ENCODE measurements at regions of chr19 and their contacts with region 1.

Region 1: GRCh38 chr19:19643158-19644053 is at the start of gene GMIP:
- DNase-seq: peak; percentile 82 to 94 (median 88)
- ATAC-seq: peak; percentile 90
- H3K4me3 ChIP-seq: peak within 1 kb of the TSS; percentile 100
- H3K4me3 Mint-ChIP-seq: peak within 1 kb of the TSS; percentile 99
- H3K27ac ChIP-seq: peak within 1 kb of the TSS; percentile 91 to 97
- H3K27ac Mint-ChIP-seq: peak within 1 kb of the TSS; percentile 95
- H3K4me1 ChIP-seq: peaks cover 33% of the 10 kb centered on the region
- H3K4me1 Mint-ChIP-seq: peaks cover 23% of the 10 kb centered on the region
- H3K27me3 ChIP-seq: no peaks in the 10 kb centered on the region
- H3K27me3 Mint-ChIP-seq: no peaks in the 10 kb centered on the region
- CTCF ChIP-seq: peak; percentile 74
- total RNA-seq, gene GMIP: 89.6 to 97.0 TPM

Region 2: GRCh38 chr19:19361075-19361594 is 282.3 kb before region 1 on chr19:
- CTCF ChIA-PET with region 1: no interaction called
- POLR2A ChIA-PET with region 1: no interaction called
- intact Hi-C with region 1: loop called in 1 of 2 experiments (anchors 10 kb)
- DNase-seq: peak; percentile 31 to 88 (median 60)
- ATAC-seq: peak; percentile 57
- H3K4me3 ChIP-seq: no peak overlapping the region
- H3K4me3 Mint-ChIP-seq: peak overlapping the region; percentile 57
- H3K27ac ChIP-seq: no peak overlapping the region
- H3K27ac Mint-ChIP-seq: peak overlapping the region; percentile 75
- H3K4me1 ChIP-seq: peaks cover 45% of the 10 kb centered on the region
- H3K4me1 Mint-ChIP-seq: peaks cover 42% of the 10 kb centered on the region
- H3K27me3 ChIP-seq: no peaks in the 10 kb centered on the region
- H3K27me3 Mint-ChIP-seq: no peaks in the 10 kb centered on the region
- CTCF ChIP-seq: peak; percentile 79

Region 3: DNA sequence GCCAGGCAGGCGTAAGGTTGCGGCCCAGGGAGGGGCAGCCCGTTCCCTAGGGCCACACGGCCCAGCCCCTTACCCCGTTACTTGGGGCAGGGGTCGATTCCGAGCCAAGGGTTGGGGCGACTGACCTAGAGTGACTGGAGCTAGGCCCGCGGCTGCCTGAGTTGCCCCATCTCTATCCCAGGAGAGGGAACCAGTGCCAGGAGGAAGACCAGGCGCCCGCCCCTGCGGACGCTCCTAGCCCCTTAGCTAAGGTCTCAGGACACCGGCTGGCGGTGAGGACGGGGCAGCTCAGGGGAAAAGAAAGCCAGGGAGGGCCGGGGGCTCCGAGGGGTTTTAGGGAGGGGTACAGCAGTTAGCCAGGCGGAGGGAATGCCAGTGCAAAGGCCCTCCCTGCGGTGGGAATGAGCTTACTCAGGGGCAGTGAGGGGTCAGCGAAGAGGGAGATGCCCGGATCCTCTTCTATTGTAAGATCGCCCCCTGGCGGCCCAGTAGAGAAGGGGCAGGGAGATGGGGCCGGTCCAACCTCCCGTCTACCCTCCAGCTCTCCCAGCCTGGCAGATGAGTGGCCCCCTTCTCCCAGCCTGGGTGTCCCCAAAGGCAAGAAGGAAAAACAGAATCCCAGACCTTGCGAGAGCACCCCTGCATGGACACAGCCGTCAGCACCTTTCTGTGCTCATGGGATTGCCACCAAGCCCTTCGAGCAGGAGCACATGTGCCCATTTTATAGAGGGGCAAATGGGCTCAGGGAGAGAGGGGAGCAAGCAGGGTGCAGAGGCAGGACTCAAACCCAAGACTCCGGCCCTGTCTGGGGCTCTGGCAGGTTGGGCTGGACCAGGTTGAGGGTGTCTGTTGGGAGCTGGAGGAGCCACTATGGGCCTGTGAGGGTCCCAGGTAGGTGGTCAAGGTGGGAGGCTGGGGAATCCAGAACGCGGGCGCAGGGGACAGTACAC is 89.1 kb before region 1 on chr19:
- CTCF ChIA-PET with region 1: interaction called, 11 read pairs
- POLR2A ChIA-PET with region 1: interaction called, 3 read pairs
- intact Hi-C with region 1: no loop called
- DNase-seq: peak in 13 of 14 experiments; percentile 38 to 76 (median 49)
- ATAC-seq: peak; percentile 42
- H3K4me3 ChIP-seq: no peak overlapping the region
- H3K4me3 Mint-ChIP-seq: no peak overlapping the region
- H3K27ac ChIP-seq: no peak overlapping the region
- H3K27ac Mint-ChIP-seq: no peak overlapping the region
- H3K4me1 ChIP-seq: peaks cover 8% of the 10 kb centered on the region
- H3K4me1 Mint-ChIP-seq: peaks cover 13% of the 10 kb centered on the region
- H3K27me3 ChIP-seq: no peaks in the 10 kb centered on the region
- H3K27me3 Mint-ChIP-seq: no peaks in the 10 kb centered on the region
- CTCF ChIP-seq: peak; percentile 81

Region 4: GRCh38 chr19:19597809-19598306 is 45.5 kb before region 1 on chr19:
- CTCF ChIA-PET with region 1: interaction called, 4 read pairs
- POLR2A ChIA-PET with region 1: interaction called, 3 read pairs
- intact Hi-C with region 1: loop called in 1 of 2 experiments (anchors 2 kb)
- DNase-seq: peak in 10 of 14 experiments; percentile 20 to 96 (median 40)
- ATAC-seq: peak; percentile 73
- H3K4me3 ChIP-seq: no peak overlapping the region
- H3K4me3 Mint-ChIP-seq: peak overlapping the region; percentile 55
- H3K27ac ChIP-seq: peak overlapping the region; percentile 94 to 97
- H3K27ac Mint-ChIP-seq: peak overlapping the region; percentile 95
- H3K4me1 ChIP-seq: peaks cover 96% of the 10 kb centered on the region
- H3K4me1 Mint-ChIP-seq: peaks cover 62% of the 10 kb centered on the region
- H3K27me3 ChIP-seq: no peaks in the 10 kb centered on the region
- H3K27me3 Mint-ChIP-seq: no peaks in the 10 kb centered on the region
- CTCF ChIP-seq: no peak

Region 5: DNA sequence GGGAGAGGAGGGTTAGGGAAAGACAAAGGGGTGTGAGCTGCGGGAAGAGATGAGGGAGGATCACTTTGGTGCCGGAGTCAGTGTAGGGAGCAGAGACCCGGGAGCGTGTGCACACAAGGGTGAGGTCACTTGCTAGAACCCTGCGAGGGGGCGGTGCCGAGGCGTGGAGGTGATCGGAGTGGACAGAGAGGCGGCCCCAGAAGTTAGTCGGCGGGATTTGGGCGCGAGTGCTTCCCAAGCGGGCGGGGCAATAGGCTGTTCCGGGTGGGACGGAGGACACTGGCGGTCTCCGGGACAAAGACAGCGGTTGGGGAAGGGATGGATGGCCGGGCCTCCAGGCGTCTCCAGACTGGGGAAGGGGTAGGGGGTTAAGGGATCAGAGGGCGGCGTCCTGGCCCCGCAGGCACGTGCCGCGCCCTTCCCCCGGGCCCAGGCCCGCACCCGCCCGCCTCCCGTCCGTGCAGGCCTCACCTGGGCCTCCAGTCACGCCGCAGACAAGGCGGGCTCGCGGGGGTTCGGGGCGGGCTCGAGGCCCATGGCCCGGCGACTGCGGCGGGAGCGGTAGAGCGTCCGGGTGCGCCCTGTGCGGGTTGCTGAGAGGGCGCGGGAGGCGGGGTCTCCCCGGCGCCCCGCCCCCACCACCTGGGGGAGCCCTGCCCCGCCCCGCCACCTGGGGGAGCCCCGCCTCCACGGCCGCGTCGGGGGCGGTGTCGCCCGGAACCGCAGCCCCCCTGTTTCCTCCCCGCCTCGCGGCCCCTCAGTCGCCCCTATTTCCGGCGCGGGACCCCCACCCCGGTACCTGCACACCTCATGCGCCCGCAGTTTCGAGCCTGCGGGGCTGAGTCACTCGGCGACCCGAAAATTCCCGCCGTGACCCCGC is 15.5 kb before region 1 on chr19 and contains the start of gene LPAR2:
- CTCF ChIA-PET with region 1: interaction called, 6 read pairs
- POLR2A ChIA-PET with region 1: interaction called, 10 read pairs
- intact Hi-C with region 1: loop called (anchors 1 to 2 kb)
- DNase-seq: peak; percentile 65 to 91 (median 80)
- ATAC-seq: peak; percentile 83
- H3K4me3 ChIP-seq: peak within 1 kb of the TSS; percentile 84
- H3K4me3 Mint-ChIP-seq: peak within 1 kb of the TSS; percentile 99
- H3K27ac ChIP-seq: peak within 1 kb of the TSS; percentile 52 to 84
- H3K27ac Mint-ChIP-seq: peak within 1 kb of the TSS; percentile 91
- H3K4me1 ChIP-seq: peaks cover 37% of the 10 kb centered on the region
- H3K4me1 Mint-ChIP-seq: peaks cover 28% of the 10 kb centered on the region
- H3K27me3 ChIP-seq: no peaks in the 10 kb centered on the region
- H3K27me3 Mint-ChIP-seq: no peaks in the 10 kb centered on the region
- CTCF ChIP-seq: no peak
- total RNA-seq, gene LPAR2: 85.9 to 93.7 TPM

Region 6: DNA sequence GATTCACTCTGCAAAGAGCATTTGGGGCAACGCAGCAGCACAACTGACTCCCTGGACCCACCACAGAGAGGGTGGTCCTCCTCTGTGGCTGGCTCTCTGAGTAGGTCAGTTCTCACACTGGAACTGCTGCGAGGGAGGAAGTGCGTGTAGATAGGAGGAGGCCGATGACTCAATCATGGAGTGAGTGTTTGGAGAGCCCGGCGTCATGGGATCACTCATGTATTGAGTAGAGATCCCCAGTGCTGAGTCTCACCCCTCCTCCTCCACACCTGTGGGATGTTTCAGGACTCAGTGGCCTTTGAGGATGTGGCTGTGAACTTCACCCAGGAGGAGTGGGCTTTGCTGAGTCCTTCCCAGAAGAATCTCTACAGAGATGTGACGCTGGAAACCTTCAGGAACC is 34.2 kb after region 1 on chr19:
- CTCF ChIA-PET with region 1: no interaction called
- POLR2A ChIA-PET with region 1: no interaction called
- intact Hi-C with region 1: no loop called
- DNase-seq: no peak
- ATAC-seq: no peak
- H3K4me3 ChIP-seq: no peak overlapping the region
- H3K4me3 Mint-ChIP-seq: no peak overlapping the region
- H3K27ac ChIP-seq: no peak overlapping the region
- H3K27ac Mint-ChIP-seq: peak overlapping the region; percentile 55
- H3K4me1 ChIP-seq: peaks cover 19% of the 10 kb centered on the region
- H3K4me1 Mint-ChIP-seq: peaks cover 8% of the 10 kb centered on the region
- H3K27me3 ChIP-seq: no peaks in the 10 kb centered on the region
- H3K27me3 Mint-ChIP-seq: no peaks in the 10 kb centered on the region
- CTCF ChIP-seq: no peak